CD4-positive, alpha-beta memory T cell (primary cell): ENCODE measurements at regions of chr13 and their contacts with region 1.

Region 1: DNA sequence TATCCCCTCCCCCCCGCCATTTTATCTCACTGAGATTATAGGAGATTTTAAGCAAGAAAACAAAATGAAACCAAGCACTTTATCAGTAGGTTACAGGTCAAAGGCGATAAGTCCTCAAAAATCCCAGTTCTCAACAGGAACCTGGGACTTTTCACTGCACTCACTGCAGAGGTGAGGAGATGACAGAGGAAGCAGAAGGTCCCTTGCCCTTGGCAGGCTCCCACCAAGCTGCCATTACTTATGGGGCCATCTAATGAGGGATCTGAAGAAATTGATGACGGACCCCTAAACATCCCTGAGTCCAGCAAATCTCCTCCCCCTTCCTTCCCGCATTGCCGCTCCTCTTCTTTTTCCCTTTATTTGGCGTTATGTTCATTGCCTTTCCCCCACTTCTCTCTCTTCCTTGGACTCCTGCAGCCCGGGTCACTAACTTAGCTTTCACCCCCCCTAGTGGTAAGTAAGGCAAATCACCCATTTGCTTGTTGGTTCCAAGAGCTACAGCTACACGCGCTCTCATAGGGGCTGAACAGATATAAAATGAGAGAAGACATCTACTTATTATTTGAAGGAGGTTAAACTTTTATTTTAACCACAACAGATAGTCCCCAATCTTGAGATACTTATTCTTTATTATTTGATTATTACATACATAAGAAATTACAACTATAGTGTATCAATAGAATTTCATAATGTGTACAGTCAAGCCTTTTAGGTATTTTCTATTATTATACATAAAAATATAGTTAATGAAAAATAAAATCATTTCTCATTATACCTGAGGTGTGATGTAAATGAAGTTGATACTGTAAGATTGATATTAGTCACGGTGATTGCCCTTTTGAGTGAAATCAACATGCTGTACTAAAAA is 52.0 kb upstream of the ARGLU1 start:
- DNase-seq: peak in 4 of 5 donors; percentile 34 to 48 (median 43)
- H3K4me3 ChIP-seq: no peak overlapping the region
- H3K4me3 Mint-ChIP-seq: peak overlapping the region in 3 of 8 donors; percentile 2 to 51 (median 38)
- H3K27ac ChIP-seq: no peak overlapping the region
- H3K27ac Mint-ChIP-seq: no peak overlapping the region
- H3K4me1 ChIP-seq: no peaks in the 10 kb centered on the region
- H3K4me1 Mint-ChIP-seq: peaks cover 0 to 8% (median 2%) of the 10 kb centered on the region in 4 donors
- H3K27me3 ChIP-seq: no peaks in the 10 kb centered on the region
- H3K27me3 Mint-ChIP-seq: peaks cover 4 to 13% of the 10 kb centered on the region in 2 donors

Region 2: GRCh38 chr13:106561551-106562170 is 58.3 kb before region 1 on chr13:
- CTCF ChIA-PET with region 1: interaction called, 6 read pairs
- POLR2A ChIA-PET with region 1: no interaction called
- intact Hi-C with region 1: loop called (anchors 5 kb)
- DNase-seq: peak in 3 of 5 donors; percentile 9 to 58 (median 26)
- H3K4me3 ChIP-seq: no peak overlapping the region
- H3K4me3 Mint-ChIP-seq: peak overlapping the region in 7 of 8 donors; percentile 9 to 78 (median 52)
- H3K27ac ChIP-seq: peak overlapping the region; percentile 22
- H3K27ac Mint-ChIP-seq: peak overlapping the region in 5 of 7 donors; percentile 36 to 55 (median 43)
- H3K4me1 ChIP-seq: peaks cover 75% of the 10 kb centered on the region
- H3K4me1 Mint-ChIP-seq: peaks cover 61 to 87% (median 73%) of the 10 kb centered on the region in 4 donors
- H3K27me3 ChIP-seq: no peaks in the 10 kb centered on the region
- H3K27me3 Mint-ChIP-seq: no peaks in the 10 kb centered on the region

Region 3: DNA sequence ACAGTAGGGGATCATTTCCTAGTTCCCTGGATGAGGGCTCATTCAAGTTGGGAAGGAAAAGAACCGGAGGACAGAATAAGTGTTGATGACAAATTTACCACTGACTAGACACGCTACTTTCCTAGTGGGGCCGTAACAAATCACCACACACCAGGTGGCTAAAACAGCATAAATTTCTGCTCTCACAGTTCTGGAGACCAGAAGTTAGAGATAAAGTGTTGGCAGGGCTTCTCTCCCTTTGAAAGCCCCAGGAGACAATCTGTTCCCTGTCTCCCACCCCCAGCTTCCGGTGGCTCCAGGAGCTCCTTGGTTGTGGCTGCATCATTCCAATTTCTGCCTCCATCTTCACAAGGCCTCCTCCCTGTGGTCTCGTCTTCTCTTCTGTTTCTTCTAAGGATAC is 13.4 kb after region 1 on chr13:
- CTCF ChIA-PET with region 1: interaction called, 19 read pairs
- POLR2A ChIA-PET with region 1: no interaction called
- intact Hi-C with region 1: no loop called
- DNase-seq: no peak
- H3K4me3 ChIP-seq: no peak overlapping the region
- H3K4me3 Mint-ChIP-seq: no peak overlapping the region
- H3K27ac ChIP-seq: no peak overlapping the region
- H3K27ac Mint-ChIP-seq: no peak overlapping the region
- H3K4me1 ChIP-seq: no peaks in the 10 kb centered on the region
- H3K4me1 Mint-ChIP-seq: no peaks in the 10 kb centered on the region
- H3K27me3 ChIP-seq: no peaks in the 10 kb centered on the region
- H3K27me3 Mint-ChIP-seq: peaks cover 11 to 16% of the 10 kb centered on the region in 2 donors

Region 4: DNA sequence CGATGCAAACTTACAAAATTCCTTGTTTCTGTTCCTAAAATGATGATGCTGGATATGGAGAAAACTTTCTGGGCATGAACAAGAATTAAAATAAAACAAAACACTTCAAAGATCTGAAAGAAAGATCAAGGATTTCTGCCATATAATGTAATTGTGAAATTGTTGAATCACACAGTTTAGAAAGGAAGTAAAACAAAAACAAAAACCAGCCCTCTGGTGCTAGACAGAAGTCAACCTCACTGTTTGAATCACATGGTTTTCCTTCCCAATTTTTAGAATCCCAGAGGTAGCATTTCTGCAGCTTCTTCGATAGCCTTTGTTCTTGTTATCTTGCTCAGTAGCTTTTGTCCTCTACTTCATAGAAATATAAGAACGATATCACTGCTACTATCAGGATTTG is 66.2 kb after region 1 on chr13:
- CTCF ChIA-PET with region 1: no interaction called
- POLR2A ChIA-PET with region 1: no interaction called
- intact Hi-C with region 1: no loop called
- DNase-seq: no peak
- H3K4me3 ChIP-seq: no peak overlapping the region
- H3K4me3 Mint-ChIP-seq: no peak overlapping the region
- H3K27ac ChIP-seq: no peak overlapping the region
- H3K27ac Mint-ChIP-seq: no peak overlapping the region
- H3K4me1 ChIP-seq: no peaks in the 10 kb centered on the region
- H3K4me1 Mint-ChIP-seq: peaks cover 0 to 5% (median 0%) of the 10 kb centered on the region in 4 donors
- H3K27me3 ChIP-seq: no peaks in the 10 kb centered on the region
- H3K27me3 Mint-ChIP-seq: peaks cover 0 to 1% of the 10 kb centered on the region in 2 donors